Tibial artery (tissue), 4 donors: ENCODE measurements at regions of chr14 and their contacts with region 1.

Region 1: GRCh38 chr14:60091550-60092530 is at the start of gene PCNX4:
- DNase-seq: peak; percentile 96 to 99
- H3K4me3 ChIP-seq: peak within 1 kb of the TSS; percentile 74 to 75
- H3K27ac ChIP-seq: peak within 1 kb of the TSS; percentile 96 to 97
- H3K4me1 ChIP-seq: peaks cover 0 to 35% (median 7%) of the 10 kb centered on the region in 4 donors
- H3K27me3 ChIP-seq: no peaks in the 10 kb centered on the region
- CTCF ChIP-seq: no peak

Region 2: GRCh38 chr14:60248697-60249318 is 157.0 kb after region 1 on chr14 and contains the start of gene PPM1A:
- intact Hi-C with region 1: loop called (anchors 10 kb)
- DNase-seq: peak; percentile 93 to 97
- H3K4me3 ChIP-seq: peak within 1 kb of the TSS; percentile 69 to 98
- H3K27ac ChIP-seq: peak within 1 kb of the TSS; percentile 96 to 98
- H3K4me1 ChIP-seq: peaks cover 0 to 37% (median 25%) of the 10 kb centered on the region in 4 donors
- H3K27me3 ChIP-seq: no peaks in the 10 kb centered on the region
- CTCF ChIP-seq: no peak